ENCODE measurements at regions of chr14 and their contacts with region 1.

Region 1: DNA sequence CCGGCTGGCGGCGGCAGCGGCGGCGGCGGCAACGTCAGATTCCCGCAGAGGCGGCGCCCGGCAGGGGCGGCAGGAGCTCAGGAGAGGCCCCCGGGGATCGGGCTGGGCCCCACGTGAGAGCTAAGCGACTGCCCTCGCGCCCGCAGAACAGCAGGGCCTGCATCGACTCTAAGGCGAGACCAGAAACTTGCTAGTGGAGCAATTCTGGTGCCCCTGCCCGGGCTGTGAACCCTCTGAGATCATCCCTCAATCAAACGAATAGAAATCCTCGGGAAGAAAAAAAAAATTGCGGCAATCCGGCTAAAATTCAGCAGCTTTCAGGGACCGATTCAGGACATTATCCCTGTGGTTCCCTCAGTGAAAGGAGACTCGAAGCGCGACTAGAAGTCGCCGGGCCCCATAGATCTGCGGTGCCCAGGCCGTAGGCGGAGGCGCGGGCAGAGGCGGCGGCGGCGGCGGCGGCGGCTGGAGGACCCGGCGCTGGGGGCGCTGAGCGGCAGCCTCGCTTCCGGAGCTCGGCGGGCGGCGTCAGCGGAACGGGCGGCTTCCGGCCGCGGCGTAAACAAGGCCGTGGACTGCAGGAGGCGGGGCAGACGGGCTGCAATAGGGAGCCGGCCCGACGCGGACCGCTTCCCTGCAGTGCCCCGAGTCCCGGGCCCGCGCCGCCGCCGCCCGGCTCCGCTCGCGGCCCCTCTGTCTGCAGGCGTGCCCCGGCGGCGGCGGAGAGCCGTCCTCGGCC is at the start of gene KLHDC2:
- DNase-seq: peak; percentile 44 to 86
- H3K4me3 ChIP-seq: peak within 1 kb of the TSS; percentile 69 to 98 (median 93)
- H3K27ac ChIP-seq: peak within 1 kb of the TSS; percentile 97
- H3K4me1 ChIP-seq: peaks cover 2 to 13% (median 3%) of the 10 kb centered on the region in 4 experiments; a peak in 4 of 7 replicates
- H3K27me3 ChIP-seq: no peaks in the 10 kb centered on the region
- CTCF ChIP-seq: peak; percentile 1 to 22 (median 21); a peak in 3 of 4 replicates
- EP300 ChIP-seq: peak in 1 of 2 experiments; percentile 73; a peak in 1 of 3 replicates
- POLR2A ChIP-seq: peak in 1 of 2 experiments; percentile 82; a peak in 2 of 3 replicates
- RAD21 ChIP-seq: no peak
- total RNA-seq, gene KLHDC2: 43.4 and 47.3 TPM in 2 replicates

Region 2: DNA sequence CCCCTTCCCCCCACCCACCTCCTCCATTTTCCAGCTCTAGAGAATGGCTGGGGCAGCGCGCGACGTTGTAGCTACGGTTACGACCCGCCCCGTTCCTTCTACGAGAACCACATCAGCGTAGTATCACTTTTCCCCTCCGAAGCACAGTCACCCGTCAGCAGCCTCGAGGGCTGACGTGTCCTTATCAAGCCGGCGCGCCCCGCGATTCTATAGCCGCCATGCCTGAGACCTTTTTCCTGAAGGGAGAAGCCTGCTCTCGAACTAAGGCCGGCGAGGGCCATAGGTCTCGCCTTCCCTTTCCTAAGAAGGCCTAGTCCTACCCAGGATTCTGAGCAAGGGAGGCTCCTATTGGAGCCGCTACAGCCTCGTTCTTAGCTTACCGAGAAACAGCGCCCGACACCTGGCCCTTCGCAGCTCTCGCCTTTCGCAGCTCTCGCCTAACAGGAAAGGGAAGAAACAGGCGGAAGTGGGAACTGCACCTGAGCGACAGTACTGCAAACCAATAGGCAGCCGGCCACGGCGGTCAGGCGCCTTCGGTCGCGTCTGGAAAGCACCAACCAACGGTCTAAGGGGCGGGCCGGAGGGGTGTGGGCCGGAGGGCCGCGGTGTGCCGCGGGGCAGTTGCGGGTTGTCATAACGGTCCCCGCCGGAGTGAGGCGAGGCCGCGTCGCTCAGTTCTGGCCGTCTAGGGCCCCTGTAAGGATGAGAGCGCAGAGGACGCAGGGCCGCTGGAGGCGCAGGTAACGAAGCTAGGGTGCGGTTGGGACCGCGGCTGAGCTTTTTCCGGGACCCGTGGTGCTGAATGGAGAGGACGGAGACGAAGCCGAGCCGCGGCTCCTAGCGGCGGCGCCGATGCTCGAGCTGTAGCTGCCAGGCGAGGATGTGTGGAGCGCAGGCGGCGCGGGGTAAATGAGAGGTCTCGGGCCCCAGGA is 147.3 kb before region 1 on chr14 and contains the starts of genes MGAT2 and RPL36AL:
- CTCF ChIA-PET with region 1: no interaction called
- POLR2A ChIA-PET with region 1: interaction called, 16 read pairs
- DNase-seq: peak; percentile 92 to 97
- H3K4me3 ChIP-seq: peak within 1 kb of the TSS; percentile 80 to 99 (median 94)
- H3K27ac ChIP-seq: peak within 1 kb of the TSS; percentile 95
- H3K4me1 ChIP-seq: peaks cover 1 to 9% (median 3%) of the 10 kb centered on the region in 4 experiments; a peak in 3 of 7 replicates
- H3K27me3 ChIP-seq: no peaks in the 10 kb centered on the region
- CTCF ChIP-seq: peak in 1 of 3 experiments; percentile 7; a peak in 1 of 4 replicates
- EP300 ChIP-seq: no peak
- POLR2A ChIP-seq: peak; percentile 87 to 91
- RAD21 ChIP-seq: 0 out of 4 replicates have a peak, but pooled peaks of 1 of the 2 experiments have one; percentile 1
- total RNA-seq, gene MGAT2: 23.7 and 24.5 TPM in 2 replicates
- total RNA-seq, gene RPL36AL: 230 and 233 TPM in 2 replicates

Region 3: GRCh38 chr14:49633640-49634546 is 133.8 kb before region 1 on chr14:
- CTCF ChIA-PET with region 1: interaction called, 16 read pairs
- POLR2A ChIA-PET with region 1: interaction called, 15 read pairs
- DNase-seq: peak; percentile 91 to 97
- H3K4me3 ChIP-seq: peak overlapping the region; percentile 88 to 98 (median 94)
- H3K27ac ChIP-seq: peak overlapping the region; percentile 95
- H3K4me1 ChIP-seq: no peaks in the 10 kb centered on the region
- H3K27me3 ChIP-seq: no peaks in the 10 kb centered on the region
- CTCF ChIP-seq: peak; percentile 84 to 86 (median 85)
- EP300 ChIP-seq: 0 out of 3 replicates have a peak, but pooled peaks of 1 of the 2 experiments have one; percentile 9
- POLR2A ChIP-seq: peak; percentile 69 to 86
- RAD21 ChIP-seq: peak; percentile 71 to 82

Region 4: GRCh38 chr14:49692811-49693734 is 74.7 kb before region 1 on chr14 and contains the start of gene KLHDC1:
- CTCF ChIA-PET with region 1: interaction called, 6 read pairs
- POLR2A ChIA-PET with region 1: interaction called, 30 read pairs
- DNase-seq: peak in 1 of 2 experiments; percentile 77
- H3K4me3 ChIP-seq: peak within 1 kb of the TSS; percentile 58 to 89 (median 76)
- H3K27ac ChIP-seq: peak within 1 kb of the TSS; percentile 33; the same call in 1 of the 2 replicates
- H3K4me1 ChIP-seq: peaks cover 0 to 9% (median 4%) of the 10 kb centered on the region in 4 experiments; a peak in 6 of 7 replicates
- H3K27me3 ChIP-seq: peaks cover 0 to 13% (median 7%) of the 10 kb centered on the region in 4 experiments
- CTCF ChIP-seq: no peak
- EP300 ChIP-seq: no peak
- POLR2A ChIP-seq: peak; percentile 55 to 58; a peak in 2 of 3 replicates
- RAD21 ChIP-seq: no peak
- total RNA-seq, gene KLHDC1: not detected in 2 replicates

Region 5: GRCh38 chr14:49733836-49734235 is 33.9 kb before region 1 on chr14:
- CTCF ChIA-PET with region 1: interaction called, 4 read pairs
- POLR2A ChIA-PET with region 1: interaction called, 10 read pairs
- DNase-seq: no peak
- H3K4me3 ChIP-seq: no peak overlapping the region
- H3K27ac ChIP-seq: no peak overlapping the region
- H3K4me1 ChIP-seq: no peaks in the 10 kb centered on the region
- H3K27me3 ChIP-seq: no peaks in the 10 kb centered on the region
- CTCF ChIP-seq: no peak
- EP300 ChIP-seq: no peak
- POLR2A ChIP-seq: no peak
- RAD21 ChIP-seq: no peak

Region 6: DNA sequence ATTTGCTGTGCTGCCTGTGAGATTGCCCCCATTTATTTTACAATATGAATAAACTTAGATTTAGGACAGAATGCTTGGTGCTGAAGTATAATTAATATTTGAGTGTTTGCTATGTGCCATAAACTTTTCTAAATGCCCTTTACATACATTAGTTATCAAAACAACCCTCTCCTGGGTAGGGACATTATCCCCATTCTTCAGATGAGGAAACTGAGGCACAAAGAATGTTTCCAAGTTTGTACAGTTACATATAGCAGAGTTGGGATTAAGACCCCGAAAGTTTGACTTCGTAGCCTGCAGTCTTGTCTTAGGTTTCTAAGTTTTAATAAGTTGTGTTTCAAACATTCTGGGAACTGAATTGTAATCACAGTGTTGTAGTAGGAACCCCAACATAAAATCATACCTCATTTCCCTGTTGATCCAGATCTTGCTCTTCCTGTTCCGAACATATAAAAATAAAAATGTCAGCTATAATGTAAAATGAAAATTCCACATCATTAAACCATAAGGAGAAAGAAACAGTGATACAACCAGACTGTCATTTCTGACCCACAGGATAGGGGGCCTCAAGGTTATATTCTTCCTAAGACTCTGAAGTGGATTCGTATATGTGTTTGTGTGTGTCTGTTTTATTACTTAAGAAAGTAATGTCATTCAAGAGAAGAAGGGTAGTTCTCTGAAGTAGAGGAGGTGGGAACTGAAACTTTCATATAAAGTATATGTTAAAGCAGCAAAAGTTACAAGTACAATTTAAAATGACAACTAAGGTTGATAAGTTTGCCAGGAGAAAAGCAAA is 18.8 kb after region 1 on chr14:
- CTCF ChIA-PET with region 1: interaction called, 3 read pairs
- POLR2A ChIA-PET with region 1: interaction called, 14 read pairs
- DNase-seq: no peak
- H3K4me3 ChIP-seq: no peak overlapping the region
- H3K27ac ChIP-seq: no peak overlapping the region
- H3K4me1 ChIP-seq: no peaks in the 10 kb centered on the region
- H3K27me3 ChIP-seq: no peaks in the 10 kb centered on the region
- CTCF ChIP-seq: no peak
- EP300 ChIP-seq: no peak
- POLR2A ChIP-seq: no peak
- RAD21 ChIP-seq: no peak

Region 7: DNA sequence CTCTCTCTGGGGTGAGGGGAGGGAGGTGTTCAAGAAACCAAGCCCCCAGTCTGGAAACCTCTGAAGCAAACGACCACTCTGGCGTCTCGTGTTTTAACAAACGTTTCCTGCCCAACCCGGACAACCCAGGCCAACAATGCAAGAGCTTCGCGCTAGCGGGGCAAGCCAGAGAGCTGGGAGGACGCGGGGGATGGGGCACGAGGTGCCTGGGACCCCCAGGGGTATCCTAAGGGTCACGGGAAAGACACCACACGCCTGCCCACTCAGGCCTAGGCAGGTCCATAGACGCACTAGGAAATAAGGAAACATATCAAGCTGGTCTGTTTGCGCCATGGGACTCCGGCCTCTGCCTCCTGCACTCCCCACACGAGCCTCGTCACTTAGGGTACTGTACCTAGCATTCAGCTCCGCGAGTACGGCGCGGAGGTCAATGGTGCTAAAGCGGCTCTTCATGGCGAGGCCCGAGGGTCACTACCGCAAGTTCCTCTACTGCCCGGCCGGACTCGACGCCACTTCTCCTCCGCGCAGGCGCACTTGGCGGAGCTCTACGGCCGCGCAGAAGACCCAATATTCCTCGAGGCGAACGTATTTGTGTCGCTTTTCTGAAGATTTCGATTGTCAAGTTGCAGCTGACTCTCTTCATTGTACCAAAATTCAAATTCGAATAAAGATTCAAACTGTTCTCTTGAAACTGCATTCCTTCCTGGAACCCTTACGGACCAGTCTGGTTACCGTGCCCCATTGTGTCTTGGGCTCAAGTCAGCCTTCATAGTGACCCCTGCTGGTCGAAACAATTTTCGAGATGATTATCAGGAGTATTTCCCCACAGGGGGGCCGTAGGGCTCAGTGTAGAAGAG is 84.8 kb after region 1 on chr14 and contains the start of gene NEMF:
- CTCF ChIA-PET with region 1: interaction called, 5 read pairs
- POLR2A ChIA-PET with region 1: interaction called, 13 read pairs
- DNase-seq: peak in 1 of 2 experiments; percentile 91
- H3K4me3 ChIP-seq: peak within 1 kb of the TSS; percentile 85 to 96 (median 95)
- H3K27ac ChIP-seq: peak within 1 kb of the TSS; percentile 78
- H3K4me1 ChIP-seq: no peaks in the 10 kb centered on the region
- H3K27me3 ChIP-seq: no peaks in the 10 kb centered on the region
- CTCF ChIP-seq: peak; percentile 53 to 70 (median 63)
- EP300 ChIP-seq: no peak
- POLR2A ChIP-seq: peak; percentile 71 to 97
- RAD21 ChIP-seq: peak in 1 of 2 experiments; percentile 22; a peak in 1 of 4 replicates
- total RNA-seq, gene NEMF: 44.5 and 45.5 TPM in 2 replicates